ENCODE measurements at regions of chr1 and their contacts with region 1.

Region 1: GRCh38 chr1:32494711-32495337 is 30.0 kb downstream of the ZBTB8B start:
- DNase-seq: no peak
- H3K4me3 ChIP-seq: no peak overlapping the region
- H3K4me3 Mint-ChIP-seq: no peak overlapping the region
- H3K27ac ChIP-seq: no peak overlapping the region
- H3K27ac Mint-ChIP-seq: no peak overlapping the region
- H3K4me1 ChIP-seq: no peaks in the 10 kb centered on the region
- H3K4me1 Mint-ChIP-seq: peaks cover 0 to 3% (median under 1%) of the 10 kb centered on the region in 3 donors
- H3K27me3 ChIP-seq: peaks cover 9% of the 10 kb centered on the region
- H3K27me3 Mint-ChIP-seq: peaks cover 27 to 43% of the 10 kb centered on the region in 2 donors

Region 2: DNA sequence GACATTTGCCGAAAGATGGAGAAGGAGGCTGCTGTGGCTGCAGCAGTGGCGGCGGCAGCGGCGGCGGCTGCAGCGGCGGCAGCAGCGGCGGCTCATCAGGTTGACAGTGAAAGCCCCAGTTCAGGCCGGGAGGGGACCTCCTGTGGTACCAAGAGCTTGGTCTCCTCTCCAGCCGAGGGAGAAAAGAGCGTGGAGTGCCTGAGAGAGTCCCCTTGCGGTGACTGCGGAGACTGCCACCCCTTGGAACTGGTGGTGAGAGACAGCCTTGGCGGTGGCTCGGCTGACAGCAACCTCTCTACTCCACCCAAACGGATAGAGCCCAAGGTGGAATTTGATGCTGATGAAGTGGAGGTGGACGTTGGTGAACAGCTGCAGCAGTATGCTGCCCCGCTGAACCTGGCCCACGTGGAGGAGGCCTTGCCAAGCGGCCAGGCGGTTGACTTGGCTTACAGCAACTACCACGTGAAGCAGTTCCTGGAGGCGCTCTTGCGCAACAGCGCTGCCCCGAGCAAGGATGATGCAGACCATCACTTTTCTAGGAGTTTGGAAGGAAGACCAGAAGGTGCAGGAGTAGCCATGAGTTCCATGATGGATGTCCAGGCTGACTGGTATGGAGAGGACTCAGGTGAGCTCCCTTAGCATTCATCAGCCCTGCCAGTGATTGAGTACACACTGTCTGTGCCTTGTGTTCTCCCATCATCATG is 23.7 kb before region 1 on chr1:
- CTCF ChIA-PET with region 1: no interaction called
- POLR2A ChIA-PET with region 1: interaction called, 10 read pairs
- DNase-seq: no peak
- H3K4me3 ChIP-seq: no peak overlapping the region
- H3K4me3 Mint-ChIP-seq: no peak overlapping the region
- H3K27ac ChIP-seq: no peak overlapping the region
- H3K27ac Mint-ChIP-seq: no peak overlapping the region
- H3K4me1 ChIP-seq: no peaks in the 10 kb centered on the region
- H3K4me1 Mint-ChIP-seq: peaks cover 0 to 1% (median 0%) of the 10 kb centered on the region in 3 donors
- H3K27me3 ChIP-seq: peaks cover 13% of the 10 kb centered on the region
- H3K27me3 Mint-ChIP-seq: peaks cover 22 to 47% of the 10 kb centered on the region in 2 donors